ENCODE measurements at regions of chr9 and their contacts with region 1.

Region 1: DNA sequence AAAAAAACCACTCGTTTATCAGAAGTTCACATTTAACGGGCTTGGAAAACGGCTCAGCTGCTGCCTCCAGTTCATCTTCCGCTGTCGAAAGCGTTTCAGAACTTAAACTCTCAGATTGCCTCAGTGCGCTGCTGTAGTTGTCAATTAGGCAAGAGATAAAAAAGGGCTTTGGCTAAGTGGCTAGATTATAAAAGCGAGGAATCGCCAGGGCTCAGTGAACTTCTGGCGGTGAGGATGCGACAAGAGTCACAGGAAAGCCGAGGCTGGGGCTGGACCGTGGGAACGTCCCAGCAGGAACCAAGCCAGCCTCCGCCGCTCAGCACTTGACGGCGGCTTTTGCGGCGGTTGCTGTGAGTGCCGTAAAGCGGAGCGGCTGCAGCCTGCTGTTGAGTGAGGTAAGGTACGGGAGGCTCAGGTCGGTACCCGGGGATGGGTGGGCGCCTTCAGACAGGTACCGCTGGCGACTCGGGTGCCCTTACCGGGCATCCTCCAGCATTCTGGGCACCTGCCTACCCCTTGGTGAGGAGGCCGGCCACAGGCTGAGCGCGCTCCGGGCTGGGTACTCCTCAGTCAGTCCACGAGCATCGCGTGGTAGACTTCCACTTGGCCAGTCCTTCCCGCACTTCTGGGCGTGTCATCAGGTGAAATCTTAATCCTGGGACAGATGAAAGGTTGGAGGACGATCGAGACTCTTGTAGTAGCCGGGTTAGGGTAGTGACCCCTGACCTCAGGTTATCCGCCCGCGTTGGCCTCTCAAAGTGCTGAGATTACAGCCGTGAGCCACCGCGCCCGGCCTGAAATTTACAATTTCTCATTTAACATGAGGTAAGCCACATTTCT is at the start of gene FKTN:
- DNase-seq: peak; percentile 81
- ATAC-seq: peak; percentile 97
- H3K4me3 ChIP-seq: peak within 1 kb of the TSS; percentile 97
- H3K27ac ChIP-seq: peak within 1 kb of the TSS; percentile 56
- H3K4me1 ChIP-seq: no peaks in the 10 kb centered on the region
- H3K27me3 ChIP-seq: no peaks in the 10 kb centered on the region
- CTCF ChIP-seq: no peak
- POLR2A ChIP-seq: no peak; the same call in 1 of the 2 replicates
- RAD21 ChIP-seq: no peak
- total RNA-seq, gene FKTN: 20.3 and 23.9 TPM in 2 replicates

Region 2: GRCh38 chr9:104934691-104935500 is 623.1 kb before region 1 on chr9:
- CTCF ChIA-PET with region 1: no interaction called
- POLR2A ChIA-PET with region 1: no interaction called
- dilution Hi-C with region 1: no loop called
- in situ Hi-C with region 1: no loop called
- intact Hi-C with region 1: no loop called
- DNase-seq: peak; percentile 15
- ATAC-seq: peak; percentile 14; the same call in 1 of the 2 replicates
- H3K4me3 ChIP-seq: no peak overlapping the region
- H3K27ac ChIP-seq: no peak overlapping the region
- H3K4me1 ChIP-seq: no peaks in the 10 kb centered on the region
- H3K27me3 ChIP-seq: no peaks in the 10 kb centered on the region
- CTCF ChIP-seq: no peak
- POLR2A ChIP-seq: no peak
- RAD21 ChIP-seq: no peak

Region 3: GRCh38 chr9:105452185-105452584 is 105.8 kb before region 1 on chr9:
- CTCF ChIA-PET with region 1: no interaction called
- POLR2A ChIA-PET with region 1: no interaction called
- dilution Hi-C with region 1: no loop called
- in situ Hi-C with region 1: no loop called
- intact Hi-C with region 1: loop called (anchors 5 kb)
- DNase-seq: no peak
- ATAC-seq: no peak
- H3K4me3 ChIP-seq: no peak overlapping the region
- H3K27ac ChIP-seq: peak overlapping the region; percentile 56; the same call in 1 of the 2 replicates
- H3K4me1 ChIP-seq: peaks cover 8% of the 10 kb centered on the region
- H3K27me3 ChIP-seq: no peaks in the 10 kb centered on the region
- CTCF ChIP-seq: no peak
- POLR2A ChIP-seq: no peak
- RAD21 ChIP-seq: no peak

Region 4: GRCh38 chr9:105541838-105542237 is 16.2 kb before region 1 on chr9:
- CTCF ChIA-PET with region 1: no interaction called
- POLR2A ChIA-PET with region 1: no interaction called
- dilution Hi-C with region 1: no loop called
- in situ Hi-C with region 1: no loop called
- intact Hi-C with region 1: no loop called
- DNase-seq: no peak
- ATAC-seq: no peak
- H3K4me3 ChIP-seq: no peak overlapping the region
- H3K27ac ChIP-seq: no peak overlapping the region
- H3K4me1 ChIP-seq: no peaks in the 10 kb centered on the region
- H3K27me3 ChIP-seq: no peaks in the 10 kb centered on the region
- CTCF ChIP-seq: no peak
- POLR2A ChIP-seq: no peak
- RAD21 ChIP-seq: no peak

Measured in IMR-90 (cell line).